Activated CD4-positive, alpha-beta memory T cell treated with anti-CD3 and anti-CD28 coated beads for 36 hours (primary cell): ENCODE measurements at regions of chr7 and their contacts with region 1.

Region 1: GRCh38 chr7:135281363-135281949 is 47.8 kb downstream of the STRA8 start:
- DNase-seq: peak; percentile 85
- H3K4me3 Mint-ChIP-seq: no peak overlapping the region
- H3K27ac Mint-ChIP-seq: peak overlapping the region; percentile 19
- H3K4me1 Mint-ChIP-seq: peaks cover 19% of the 10 kb centered on the region
- H3K27me3 Mint-ChIP-seq: peaks cover 10% of the 10 kb centered on the region

Region 2: GRCh38 chr7:135335628-135336139 is 54.2 kb after region 1 on chr7:
- CTCF ChIA-PET with region 1: interaction called, 84 read pairs
- POLR2A ChIA-PET with region 1: no interaction called
- intact Hi-C with region 1: loop called (anchors 1 kb)
- DNase-seq: peak; percentile 61
- H3K4me3 Mint-ChIP-seq: no peak overlapping the region
- H3K27ac Mint-ChIP-seq: no peak overlapping the region
- H3K4me1 Mint-ChIP-seq: no peaks in the 10 kb centered on the region
- H3K27me3 Mint-ChIP-seq: no peaks in the 10 kb centered on the region

Region 3: GRCh38 chr7:135434047-135434446 is 152.6 kb after region 1 on chr7:
- CTCF ChIA-PET with region 1: no interaction called
- POLR2A ChIA-PET with region 1: no interaction called
- intact Hi-C with region 1: no loop called
- DNase-seq: no peak
- H3K4me3 Mint-ChIP-seq: no peak overlapping the region
- H3K27ac Mint-ChIP-seq: no peak overlapping the region
- H3K4me1 Mint-ChIP-seq: peaks cover 21% of the 10 kb centered on the region
- H3K27me3 Mint-ChIP-seq: no peaks in the 10 kb centered on the region

Region 4: GRCh38 chr7:135509903-135510602 is 228.6 kb after region 1 on chr7 and contains the start of gene CNOT4:
- CTCF ChIA-PET with region 1: interaction called, 3 read pairs
- POLR2A ChIA-PET with region 1: no interaction called
- intact Hi-C with region 1: loop called (anchors 1 kb)
- DNase-seq: peak; percentile 98
- H3K4me3 Mint-ChIP-seq: no peak within 1 kb of the TSS
- H3K27ac Mint-ChIP-seq: no peak within 1 kb of the TSS
- H3K4me1 Mint-ChIP-seq: peaks cover 9% of the 10 kb centered on the region
- H3K27me3 Mint-ChIP-seq: no peaks in the 10 kb centered on the region
- total RNA-seq, gene CNOT4: 16.1 to 17.4 TPM

Region 5: GRCh38 chr7:135558337-135558767 is 276.9 kb after region 1 on chr7:
- CTCF ChIA-PET with region 1: interaction called, 7 read pairs
- POLR2A ChIA-PET with region 1: no interaction called
- intact Hi-C with region 1: loop called (anchors 1 kb)
- DNase-seq: peak; percentile 79
- H3K4me3 Mint-ChIP-seq: no peak overlapping the region
- H3K27ac Mint-ChIP-seq: no peak overlapping the region
- H3K4me1 Mint-ChIP-seq: peaks cover 16% of the 10 kb centered on the region
- H3K27me3 Mint-ChIP-seq: no peaks in the 10 kb centered on the region

Region 6: GRCh38 chr7:135620980-135621850 is 339.8 kb after region 1 on chr7:
- CTCF ChIA-PET with region 1: interaction called, 4 read pairs
- POLR2A ChIA-PET with region 1: no interaction called
- intact Hi-C with region 1: loop called (anchors 2 kb)
- DNase-seq: no peak
- H3K4me3 Mint-ChIP-seq: no peak overlapping the region
- H3K27ac Mint-ChIP-seq: no peak overlapping the region
- H3K4me1 Mint-ChIP-seq: peaks cover 3% of the 10 kb centered on the region
- H3K27me3 Mint-ChIP-seq: no peaks in the 10 kb centered on the region

Region 7: DNA sequence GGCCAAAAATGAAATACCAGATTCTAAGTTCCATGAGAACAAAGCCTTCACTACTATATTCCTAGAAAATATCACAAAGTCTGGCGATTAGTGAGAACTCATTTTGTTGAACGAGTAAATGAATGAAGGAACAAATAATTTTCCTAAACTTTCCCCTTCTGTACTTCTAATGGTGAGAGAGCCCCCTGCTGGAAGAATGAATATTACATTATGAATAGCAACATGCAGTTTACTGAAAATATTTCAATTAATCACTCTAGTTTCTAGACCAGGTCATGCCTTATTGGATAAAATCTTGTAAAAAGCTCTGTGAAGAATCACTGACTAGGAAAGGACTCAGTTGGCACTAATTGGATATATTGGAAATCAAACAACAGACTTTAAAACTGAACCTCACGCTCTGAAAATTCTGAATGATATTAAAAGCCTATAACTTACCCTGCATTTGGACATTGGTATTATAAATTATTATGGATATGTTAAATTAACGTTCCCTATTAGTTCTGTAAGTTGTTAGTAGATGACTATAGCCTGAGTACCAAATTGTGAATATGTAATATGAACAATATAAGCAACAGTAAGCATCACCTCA is 728.1 kb after region 1 on chr7:
- CTCF ChIA-PET with region 1: no interaction called
- POLR2A ChIA-PET with region 1: no interaction called
- intact Hi-C with region 1: loop called (anchors 10 kb)
- DNase-seq: no peak
- H3K4me3 Mint-ChIP-seq: no peak overlapping the region
- H3K27ac Mint-ChIP-seq: no peak overlapping the region
- H3K4me1 Mint-ChIP-seq: peaks cover 7% of the 10 kb centered on the region
- H3K27me3 Mint-ChIP-seq: peaks cover 3% of the 10 kb centered on the region

Region 8: GRCh38 chr7:136023134-136023875 is 741.8 kb after region 1 on chr7:
- CTCF ChIA-PET with region 1: no interaction called
- POLR2A ChIA-PET with region 1: no interaction called
- intact Hi-C with region 1: no loop called
- DNase-seq: no peak
- H3K4me3 Mint-ChIP-seq: no peak overlapping the region
- H3K27ac Mint-ChIP-seq: no peak overlapping the region
- H3K4me1 Mint-ChIP-seq: peaks cover 15% of the 10 kb centered on the region
- H3K27me3 Mint-ChIP-seq: peaks cover 1% of the 10 kb centered on the region